ENCODE measurements at regions of chr1 and their contacts with region 1.

Region 1: GRCh38 chr1:184982002-184982954 is 8.0 kb upstream of the NIBAN1 start:
- DNase-seq: peak; percentile 71 to 90 (median 81)
- H3K4me3 ChIP-seq: no peak overlapping the region
- H3K27ac ChIP-seq: no peak overlapping the region
- H3K4me1 ChIP-seq: no peaks in the 10 kb centered on the region
- H3K27me3 ChIP-seq: no peaks in the 10 kb centered on the region
- CTCF ChIP-seq: peak; percentile 87 to 96 (median 92)
- POLR2A ChIP-seq: no peak

Region 2: GRCh38 chr1:184805667-184806295 is 176.5 kb before region 1 on chr1:
- intact Hi-C with region 1: loop called (anchors 2 to 5 kb)
- DNase-seq: peak; percentile 87 to 98 (median 93)
- H3K4me3 ChIP-seq: no peak overlapping the region
- H3K27ac ChIP-seq: peak overlapping the region in 1 of 5 donors; percentile 44
- H3K4me1 ChIP-seq: peaks cover 4 to 7% of the 10 kb centered on the region in 2 donors
- H3K27me3 ChIP-seq: no peaks in the 10 kb centered on the region
- CTCF ChIP-seq: peak; percentile 75 to 99 (median 96)
- POLR2A ChIP-seq: no peak

Region 3: GRCh38 chr1:185156854-185157598 is 174.7 kb after region 1 on chr1 and contains the starts of genes SWT1 and TRMT1L:
- intact Hi-C with region 1: loop called in 1 of 2 experiments (anchors 10 kb)
- DNase-seq: peak; percentile 99 to 100 (median 100)
- H3K4me3 ChIP-seq: peak within 1 kb of the TSS; percentile 91 to 98 (median 94)
- H3K27ac ChIP-seq: peak within 1 kb of the TSS; percentile 98 to 100 (median 99)
- H3K4me1 ChIP-seq: peaks cover 13 to 43% of the 10 kb centered on the region in 2 donors
- H3K27me3 ChIP-seq: no peaks in the 10 kb centered on the region
- CTCF ChIP-seq: no peak
- POLR2A ChIP-seq: peak; percentile 96 to 99
- total RNA-seq, gene SWT1: 2.9 to 11.0 (median 6.3) TPM
- total RNA-seq, gene TRMT1L: 13.6 to 30.4 (median 24.1) TPM

Region 4: GRCh38 chr1:185170291-185170848 is 188.1 kb after region 1 on chr1:
- intact Hi-C with region 1: loop called (anchors 10 kb)
- DNase-seq: peak; percentile 25 to 63 (median 52)
- H3K4me3 ChIP-seq: no peak overlapping the region
- H3K27ac ChIP-seq: no peak overlapping the region
- H3K4me1 ChIP-seq: peaks cover 0 to 4% of the 10 kb centered on the region in 2 donors
- H3K27me3 ChIP-seq: no peaks in the 10 kb centered on the region
- CTCF ChIP-seq: peak; percentile 50 to 72 (median 64)
- POLR2A ChIP-seq: no peak

Region 5: DNA sequence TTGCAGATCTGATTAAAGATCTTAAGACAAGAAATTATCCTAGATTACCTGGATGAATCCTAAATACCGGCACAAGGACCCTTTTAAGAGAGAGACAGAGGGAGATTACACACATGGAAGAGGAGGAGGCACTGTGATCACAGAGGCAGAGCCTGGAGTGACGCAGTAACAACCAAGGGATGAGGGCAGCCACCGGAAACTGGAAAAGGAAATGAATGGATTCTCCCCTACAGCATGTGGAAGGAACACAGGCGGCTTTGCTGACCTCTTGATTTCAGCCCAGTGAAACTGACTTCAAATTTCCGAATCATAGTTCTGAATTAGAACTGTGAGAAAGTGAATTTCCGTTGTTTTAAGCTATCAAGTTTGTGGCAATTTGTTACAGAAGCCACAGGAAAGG is 384.9 kb after region 1 on chr1:
- intact Hi-C with region 1: no loop called
- DNase-seq: peak in 1 of 7 donors; percentile 17
- H3K4me3 ChIP-seq: no peak overlapping the region
- H3K27ac ChIP-seq: no peak overlapping the region
- H3K4me1 ChIP-seq: no peaks in the 10 kb centered on the region
- H3K27me3 ChIP-seq: no peaks in the 10 kb centered on the region
- CTCF ChIP-seq: no peak
- POLR2A ChIP-seq: no peak